ENCODE measurements at regions of chr9 and their contacts with region 1.

Region 1: GRCh38 chr9:112061152-112061740 is 113.9 kb downstream of the SUSD1 start:
- DNase-seq: peak; percentile 98
- H3K4me3 ChIP-seq: no peak overlapping the region
- H3K27ac ChIP-seq: peak overlapping the region; percentile 97
- H3K4me1 ChIP-seq: peaks cover 35% of the 10 kb centered on the region
- H3K27me3 ChIP-seq: no peaks in the 10 kb centered on the region
- CTCF ChIP-seq: no peak
- POLR2A ChIP-seq: peak; percentile 27

Region 2: DNA sequence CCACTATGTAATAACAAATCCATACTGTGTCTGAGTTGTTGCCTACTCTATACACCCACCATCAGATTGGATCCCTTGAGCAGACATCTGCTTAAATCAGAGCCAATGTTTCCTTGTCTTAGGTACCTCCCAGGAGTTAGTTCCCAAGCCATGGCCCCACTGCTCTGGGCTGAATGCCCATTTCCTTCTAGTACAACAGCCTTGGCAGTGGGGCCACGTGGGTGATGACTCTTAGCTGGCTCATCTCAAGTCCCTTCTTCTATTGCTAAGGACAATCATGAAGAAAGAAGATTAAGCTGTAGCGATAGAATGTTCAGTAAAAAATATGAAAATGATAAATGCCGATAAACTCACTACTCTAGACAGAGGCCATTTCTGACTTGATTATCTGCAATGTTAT is 478.4 kb before region 1 on chr9:
- CTCF ChIA-PET with region 1: no interaction called
- POLR2A ChIA-PET with region 1: no interaction called
- dilution Hi-C with region 1: no loop called
- intact Hi-C with region 1: no loop called
- DNase-seq: no peak
- H3K4me3 ChIP-seq: no peak overlapping the region
- H3K27ac ChIP-seq: no peak overlapping the region
- H3K4me1 ChIP-seq: no peaks in the 10 kb centered on the region
- H3K27me3 ChIP-seq: no peaks in the 10 kb centered on the region
- CTCF ChIP-seq: no peak
- POLR2A ChIP-seq: no peak

Region 3: GRCh38 chr9:111957856-111958652 is 103.2 kb before region 1 on chr9:
- CTCF ChIA-PET with region 1: interaction called, 4 read pairs
- POLR2A ChIA-PET with region 1: no interaction called
- dilution Hi-C with region 1: no loop called
- intact Hi-C with region 1: loop called (anchors 1 kb)
- DNase-seq: peak; percentile 96
- H3K4me3 ChIP-seq: peak overlapping the region in 1 of 3 experiments; percentile 6
- H3K27ac ChIP-seq: peak overlapping the region; percentile 89
- H3K4me1 ChIP-seq: peaks cover 43% of the 10 kb centered on the region
- H3K27me3 ChIP-seq: no peaks in the 10 kb centered on the region
- CTCF ChIP-seq: no peak
- POLR2A ChIP-seq: peak; percentile 79

Region 4: DNA sequence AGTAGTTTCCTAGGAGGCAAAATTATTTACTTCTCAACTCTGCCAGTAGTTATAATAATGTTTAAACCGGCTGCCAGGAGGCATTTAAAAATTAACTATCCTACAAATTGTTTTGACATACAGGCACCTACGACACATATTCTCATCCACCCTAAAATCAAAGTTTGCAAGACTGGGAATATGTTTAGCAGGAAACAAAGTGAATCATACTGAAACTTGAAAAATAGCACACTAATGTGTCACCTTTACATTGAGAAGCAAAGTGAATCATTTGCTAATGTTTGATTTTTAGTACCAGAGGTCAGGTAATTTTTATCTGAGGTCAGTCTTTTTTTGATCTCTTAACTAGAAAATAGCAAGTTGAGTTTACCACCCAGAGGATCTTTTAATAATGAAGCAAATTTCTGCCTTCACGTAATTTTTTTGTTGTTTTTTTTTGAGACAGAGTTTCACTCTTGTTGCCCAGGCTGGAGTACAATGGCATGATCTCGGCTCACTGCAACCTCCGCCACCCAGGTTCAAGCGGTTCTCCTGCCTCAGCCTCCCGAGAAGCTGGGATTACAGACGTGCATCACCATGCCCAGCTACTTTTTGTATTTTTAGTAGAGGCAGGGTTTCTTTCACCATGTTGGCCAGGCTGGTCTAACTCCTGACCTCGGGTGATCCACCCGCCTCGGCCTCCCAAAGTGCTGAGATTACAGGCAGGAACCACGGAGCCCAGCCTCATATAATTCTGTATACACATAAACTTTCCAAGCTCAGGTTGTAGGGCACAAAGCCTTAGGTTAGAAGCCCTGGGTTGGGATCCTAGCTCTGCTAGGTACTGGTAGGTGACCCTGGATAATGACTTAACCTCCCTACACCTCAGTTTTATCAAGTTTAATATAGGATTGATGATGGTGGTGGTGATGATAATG is 40.3 kb before region 1 on chr9:
- CTCF ChIA-PET with region 1: interaction called, 8 read pairs
- POLR2A ChIA-PET with region 1: no interaction called
- dilution Hi-C with region 1: no loop called
- intact Hi-C with region 1: loop called (anchors 1 kb)
- DNase-seq: peak; percentile 74
- H3K4me3 ChIP-seq: no peak overlapping the region
- H3K27ac ChIP-seq: peak overlapping the region; percentile 64
- H3K4me1 ChIP-seq: peaks cover 24% of the 10 kb centered on the region
- H3K27me3 ChIP-seq: no peaks in the 10 kb centered on the region
- CTCF ChIP-seq: no peak
- POLR2A ChIP-seq: no peak

Region 5: GRCh38 chr9:112041536-112042243 is 19.6 kb before region 1 on chr9:
- CTCF ChIA-PET with region 1: interaction called, 4 read pairs
- POLR2A ChIA-PET with region 1: no interaction called
- dilution Hi-C with region 1: no loop called
- intact Hi-C with region 1: loop called (anchors 1 kb)
- DNase-seq: peak; percentile 83
- H3K4me3 ChIP-seq: no peak overlapping the region
- H3K27ac ChIP-seq: peak overlapping the region; percentile 83
- H3K4me1 ChIP-seq: peaks cover 30% of the 10 kb centered on the region
- H3K27me3 ChIP-seq: no peaks in the 10 kb centered on the region
- CTCF ChIP-seq: no peak
- POLR2A ChIP-seq: no peak